Endothelial cell of umbilical vein (primary cell): ENCODE measurements at regions of chr1 and their contacts with region 1.

Region 1: DNA sequence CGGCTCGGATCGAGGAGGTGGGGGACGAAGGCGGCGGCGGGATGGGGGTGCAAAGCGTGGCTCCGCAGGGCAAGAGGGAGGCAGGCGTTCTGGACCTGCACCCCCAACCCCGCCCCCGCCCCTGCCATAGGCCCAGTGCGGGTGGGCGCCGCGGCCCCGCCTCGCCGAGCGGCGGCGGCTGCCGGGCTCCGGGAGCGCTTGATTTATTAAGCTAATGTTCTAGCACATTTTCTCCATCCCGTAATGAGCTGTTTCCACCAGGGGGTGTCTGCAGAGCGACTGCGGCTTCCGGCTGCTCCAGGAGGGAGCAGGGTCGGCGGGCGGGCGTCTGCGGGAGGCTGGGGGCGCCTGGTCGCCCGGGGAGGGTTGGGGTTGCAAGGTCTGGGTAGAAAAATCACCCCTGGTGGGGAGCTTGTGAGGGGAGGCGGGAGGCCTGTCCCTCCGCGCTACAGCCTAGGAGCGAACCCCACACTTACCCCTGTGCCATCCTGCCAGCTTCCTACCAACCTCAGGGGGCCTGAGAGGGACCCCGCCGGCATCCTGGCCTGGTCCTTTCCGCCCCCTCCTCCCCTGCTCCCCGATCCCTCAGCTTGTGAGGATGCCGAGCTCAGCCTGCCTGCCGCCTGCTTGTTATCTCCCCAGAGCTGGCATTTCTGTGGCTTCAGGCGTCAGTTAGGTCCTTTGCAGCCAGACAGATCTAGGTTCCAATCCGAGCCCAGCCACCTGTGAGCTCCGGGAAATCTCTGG is 48.5 kb upstream of the ACOT11 start:
- DNase-seq: peak; percentile 43
- H3K4me3 ChIP-seq: peak overlapping the region; percentile 17 to 27 (median 26)
- H3K27ac ChIP-seq: no peak overlapping the region
- H3K4me1 ChIP-seq: peaks cover 4% of the 10 kb centered on the region
- H3K27me3 ChIP-seq: peaks cover 8 to 9% of the 10 kb centered on the region in 2 experiments
- CTCF ChIP-seq: peak in 1 of 2 donors; percentile 51
- POLR2A ChIP-seq: no peak

Region 2: DNA sequence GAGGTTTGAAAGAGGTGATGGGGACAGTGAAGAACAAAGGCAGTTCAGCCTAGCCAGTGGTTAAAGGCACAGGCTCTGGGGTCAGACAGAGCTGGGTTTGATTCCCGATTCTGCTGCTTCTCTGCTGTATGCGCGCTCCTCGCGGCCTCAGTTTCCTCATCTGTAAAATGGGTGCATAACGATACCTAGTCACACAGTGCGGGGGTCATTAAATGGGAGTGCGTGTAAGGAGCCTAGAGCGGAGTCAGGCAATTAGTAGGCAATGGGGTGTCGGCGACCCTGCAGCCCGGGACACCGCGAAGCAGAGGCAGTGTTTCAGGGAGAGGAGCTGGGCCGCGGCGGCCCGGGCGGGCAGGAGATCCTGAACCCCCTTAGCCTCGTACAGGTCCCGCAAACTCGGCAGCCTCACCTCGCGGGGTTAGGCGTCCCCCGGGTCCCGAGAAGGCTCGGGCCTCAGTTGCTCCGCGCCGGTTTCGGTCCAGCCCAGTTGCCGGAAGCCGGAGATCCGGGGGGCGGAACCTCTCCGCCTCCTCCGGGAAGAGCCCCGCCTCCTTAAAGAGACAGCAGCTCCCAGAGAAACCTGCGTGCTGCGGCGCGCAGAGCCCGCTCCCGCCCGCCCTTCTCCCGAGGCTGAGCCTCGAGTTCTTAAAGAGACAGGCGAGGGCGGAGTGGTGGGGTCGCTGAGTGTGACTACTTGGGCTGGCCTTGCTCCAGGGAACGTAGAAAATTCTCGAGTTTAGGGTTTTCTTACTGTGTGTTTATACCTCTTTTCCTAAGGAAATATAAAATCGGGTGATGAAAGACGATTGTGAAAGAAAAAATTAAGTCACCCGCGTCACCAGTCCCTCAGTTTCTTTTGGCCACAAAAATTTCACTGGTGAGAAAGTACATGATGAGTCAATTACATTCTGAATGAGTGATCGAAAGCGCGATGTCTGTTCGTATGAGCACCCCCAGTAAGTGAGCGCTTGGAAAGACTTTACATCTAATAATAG is 609.9 kb before region 1 on chr1 and contains the start of gene YIPF1:
- CTCF ChIA-PET with region 1: no interaction called
- POLR2A ChIA-PET with region 1: no interaction called
- dilution Hi-C with region 1: no loop called
- intact Hi-C with region 1: no loop called
- DNase-seq: peak; percentile 88
- H3K4me3 ChIP-seq: peak within 1 kb of the TSS; percentile 36 to 86 (median 67)
- H3K27ac ChIP-seq: no peak within 1 kb of the TSS
- H3K4me1 ChIP-seq: peaks cover 8% of the 10 kb centered on the region
- H3K27me3 ChIP-seq: no peaks in the 10 kb centered on the region
- CTCF ChIP-seq: no peak
- POLR2A ChIP-seq: peak; percentile 78
- total RNA-seq, gene YIPF1: 14.8 TPM in 2 replicates

Region 3: GRCh38 chr1:54429838-54430237 is 69.7 kb before region 1 on chr1:
- CTCF ChIA-PET with region 1: no interaction called
- POLR2A ChIA-PET with region 1: no interaction called
- dilution Hi-C with region 1: no loop called
- intact Hi-C with region 1: no loop called
- DNase-seq: no peak
- H3K4me3 ChIP-seq: no peak overlapping the region
- H3K27ac ChIP-seq: no peak overlapping the region
- H3K4me1 ChIP-seq: no peaks in the 10 kb centered on the region
- H3K27me3 ChIP-seq: peaks cover 0 to 2% of the 10 kb centered on the region in 2 experiments
- CTCF ChIP-seq: no peak
- POLR2A ChIP-seq: no peak

Region 4: DNA sequence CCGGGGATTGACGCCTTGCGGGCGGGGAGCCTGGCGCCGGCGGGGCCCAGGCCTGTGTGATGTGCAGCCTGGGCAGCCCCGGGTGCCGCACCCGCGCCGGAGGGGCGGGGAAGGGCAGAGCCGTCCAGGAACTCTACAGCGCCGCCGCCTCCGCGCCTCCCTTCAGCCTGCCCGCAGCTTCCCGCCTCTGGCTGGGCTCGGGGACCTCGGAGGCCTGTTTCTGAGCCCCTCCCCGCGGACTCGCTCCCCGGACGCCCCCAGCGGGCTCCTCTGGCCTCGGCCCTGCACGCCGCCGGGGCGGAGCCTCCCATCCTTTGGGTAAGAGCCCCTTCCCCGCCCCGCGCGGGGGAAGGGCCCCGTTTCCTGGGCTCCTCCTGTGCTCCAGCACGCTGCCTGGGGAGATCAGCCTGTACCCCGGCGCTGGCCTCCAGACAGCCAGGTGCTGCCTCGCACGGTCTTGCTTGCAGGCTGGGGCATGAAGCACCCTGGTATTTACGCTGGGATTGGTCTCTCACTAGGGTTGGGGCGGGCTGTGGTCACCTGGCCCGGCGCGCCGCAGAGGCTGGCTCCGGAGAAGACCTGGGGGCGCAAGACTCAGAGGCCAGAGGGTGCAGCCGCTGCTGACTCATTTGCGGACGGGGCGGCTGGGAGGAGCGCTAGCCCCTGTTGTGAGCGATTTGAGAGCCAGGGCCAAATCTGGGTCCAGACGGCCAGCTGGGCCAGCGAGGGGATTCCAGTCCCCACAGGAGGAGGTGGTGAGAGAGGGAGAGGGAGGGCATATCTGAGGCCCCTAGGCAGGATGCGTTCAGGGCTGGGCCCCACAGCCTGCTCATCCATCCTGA is 42.8 kb after region 1 on chr1:
- CTCF ChIA-PET with region 1: interaction called, 13 read pairs
- POLR2A ChIA-PET with region 1: no interaction called
- dilution Hi-C with region 1: no loop called
- intact Hi-C with region 1: loop called (anchors 2 kb)
- DNase-seq: peak; percentile 38
- H3K4me3 ChIP-seq: peak overlapping the region; percentile 37 to 56 (median 39)
- H3K27ac ChIP-seq: peak overlapping the region; percentile 54
- H3K4me1 ChIP-seq: peaks cover 19% of the 10 kb centered on the region
- H3K27me3 ChIP-seq: no peaks in the 10 kb centered on the region
- CTCF ChIP-seq: peak in 1 of 2 donors; percentile 16
- POLR2A ChIP-seq: peak; percentile 29

Region 5: GRCh38 chr1:54547601-54548388 is 48.3 kb after region 1 on chr1 and contains the start of gene ACOT11:
- CTCF ChIA-PET with region 1: interaction called, 13 read pairs
- POLR2A ChIA-PET with region 1: no interaction called
- dilution Hi-C with region 1: no loop called
- intact Hi-C with region 1: loop called (anchors 2 kb)
- DNase-seq: no peak
- H3K4me3 ChIP-seq: no peak within 1 kb of the TSS
- H3K27ac ChIP-seq: no peak within 1 kb of the TSS
- H3K4me1 ChIP-seq: peaks cover 10% of the 10 kb centered on the region
- H3K27me3 ChIP-seq: no peaks in the 10 kb centered on the region
- CTCF ChIP-seq: peak; percentile 16 to 29
- POLR2A ChIP-seq: no peak
- total RNA-seq, gene ACOT11: 5.4 and 5.7 TPM in 2 replicates

Region 6: DNA sequence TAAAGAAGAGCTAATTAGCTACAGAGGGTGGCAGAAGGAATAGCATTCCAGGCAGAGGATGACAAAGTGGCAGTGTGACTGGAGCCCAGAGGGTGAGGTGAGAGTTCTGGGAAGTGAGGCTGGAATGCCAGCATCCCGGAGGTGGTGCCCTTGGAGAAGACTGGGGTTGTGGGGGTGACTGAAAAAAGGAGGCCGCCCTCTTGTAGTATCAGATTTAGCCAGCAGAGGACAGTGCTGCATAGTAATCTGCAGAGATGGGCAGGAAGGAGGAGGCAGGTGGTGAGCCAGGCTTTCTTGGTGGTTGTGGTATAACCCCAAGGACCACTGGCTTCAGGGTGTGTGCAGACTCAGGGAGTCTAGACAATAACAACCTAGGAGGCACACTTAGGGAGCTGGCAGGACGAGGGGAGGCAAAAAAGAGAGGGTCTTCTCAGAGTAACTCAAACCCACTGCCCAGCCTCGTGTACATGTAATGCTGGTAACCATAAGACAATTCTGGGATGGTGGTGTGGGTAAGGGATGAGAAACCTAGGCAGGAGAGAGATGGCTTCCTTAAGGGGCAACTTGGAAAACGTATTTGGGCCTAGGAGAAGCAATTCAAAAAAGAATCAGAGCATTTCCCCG is 172.6 kb after region 1 on chr1:
- CTCF ChIA-PET with region 1: interaction called, 11 read pairs
- POLR2A ChIA-PET with region 1: no interaction called
- dilution Hi-C with region 1: no loop called
- intact Hi-C with region 1: no loop called
- DNase-seq: peak; percentile 49
- H3K4me3 ChIP-seq: no peak overlapping the region
- H3K27ac ChIP-seq: no peak overlapping the region
- H3K4me1 ChIP-seq: no peaks in the 10 kb centered on the region
- H3K27me3 ChIP-seq: peaks cover 0 to 2% of the 10 kb centered on the region in 2 experiments
- CTCF ChIP-seq: peak; percentile 63 to 78
- POLR2A ChIP-seq: no peak

Region 7: GRCh38 chr1:54715493-54716298 is 216.2 kb after region 1 on chr1 and contains the start of gene TTC4:
- CTCF ChIA-PET with region 1: interaction called, 12 read pairs
- POLR2A ChIA-PET with region 1: no interaction called
- dilution Hi-C with region 1: no loop called
- intact Hi-C with region 1: no loop called
- DNase-seq: peak; percentile 81
- H3K4me3 ChIP-seq: peak within 1 kb of the TSS; percentile 68 to 98 (median 95)
- H3K27ac ChIP-seq: peak within 1 kb of the TSS; percentile 77
- H3K4me1 ChIP-seq: peaks cover 11% of the 10 kb centered on the region
- H3K27me3 ChIP-seq: peaks cover 0 to 2% of the 10 kb centered on the region in 2 experiments
- CTCF ChIP-seq: no peak
- POLR2A ChIP-seq: peak; percentile 96
- total RNA-seq, gene TTC4: 21.4 and 28.8 TPM in 2 replicates

Region 8: DNA sequence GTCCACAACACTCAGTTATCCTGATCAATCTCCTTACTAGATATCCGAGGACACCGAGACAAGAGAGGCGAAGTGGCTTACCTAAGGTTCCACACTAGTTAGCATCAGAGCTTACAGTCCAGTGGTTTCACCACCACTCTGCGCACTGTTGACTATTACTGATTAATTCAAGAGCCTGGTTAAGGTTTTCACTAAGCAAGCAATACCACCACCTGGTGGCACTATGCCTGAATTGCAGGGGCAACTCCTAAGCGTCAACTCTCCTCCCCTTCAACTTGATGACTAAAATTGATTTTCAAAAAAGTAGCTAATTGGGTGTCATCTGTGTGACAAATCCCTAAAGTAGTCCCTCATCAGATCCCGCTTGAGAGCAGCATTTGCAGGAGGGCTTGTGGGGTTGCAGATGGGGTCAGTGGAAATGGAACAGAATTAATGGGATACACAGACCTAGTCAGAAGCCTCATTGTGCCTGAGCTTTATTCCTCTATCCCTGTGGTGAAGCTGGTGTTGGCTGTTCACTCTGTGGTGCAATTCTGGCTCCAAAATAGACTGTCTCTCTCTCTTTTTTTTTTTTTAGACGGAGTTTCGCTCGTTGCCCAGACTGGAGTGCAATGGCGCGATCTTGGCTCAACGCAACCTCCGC is 292.5 kb after region 1 on chr1:
- CTCF ChIA-PET with region 1: interaction called, 10 read pairs
- POLR2A ChIA-PET with region 1: no interaction called
- dilution Hi-C with region 1: no loop called
- intact Hi-C with region 1: loop called (anchors 5 kb)
- DNase-seq: peak; percentile 20
- H3K4me3 ChIP-seq: no peak overlapping the region
- H3K27ac ChIP-seq: no peak overlapping the region
- H3K4me1 ChIP-seq: no peaks in the 10 kb centered on the region
- H3K27me3 ChIP-seq: peaks cover 2% of the 10 kb centered on the region in 2 experiments
- CTCF ChIP-seq: peak; percentile 55 to 73
- POLR2A ChIP-seq: no peak

Region 9: DNA sequence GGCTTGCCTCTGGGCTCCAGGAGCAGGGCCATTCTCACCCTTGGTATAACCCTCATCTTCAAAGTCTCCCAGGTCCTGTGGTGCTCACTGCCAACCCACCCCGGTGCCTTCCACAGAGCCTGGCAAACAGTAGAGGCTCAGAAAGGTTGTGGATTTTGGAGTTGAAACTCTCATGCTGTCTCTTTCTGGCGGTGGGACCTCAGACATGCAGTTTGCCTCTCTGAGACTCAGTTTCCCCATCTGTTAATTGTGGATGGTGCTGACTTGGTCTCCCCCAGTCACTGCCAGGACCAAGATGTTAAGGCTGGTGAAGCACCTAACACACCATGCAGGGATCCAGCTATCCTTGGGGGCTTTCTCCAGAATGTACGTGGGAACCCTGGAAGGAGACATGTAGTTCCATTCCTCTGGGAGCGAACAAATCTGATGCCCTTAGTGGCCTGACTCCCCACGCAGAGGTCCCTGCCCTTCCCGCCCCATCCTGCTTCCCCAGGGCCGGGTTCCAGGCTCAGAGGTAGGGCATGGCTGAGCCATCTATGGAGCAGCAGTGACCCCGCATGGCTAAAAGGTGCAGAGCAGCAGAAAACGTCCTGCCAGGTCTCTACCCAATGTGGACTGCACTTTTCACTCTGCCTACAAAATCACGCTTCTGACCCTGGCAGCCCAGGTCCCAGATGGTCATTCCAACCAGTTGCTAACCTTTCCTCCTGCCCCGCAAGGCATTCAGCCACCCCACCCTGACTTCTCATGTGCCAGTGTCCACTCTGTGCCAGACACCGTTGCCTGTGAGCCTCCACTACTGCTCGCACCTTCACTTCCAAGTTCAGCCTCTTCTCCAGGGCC is 310.8 kb after region 1 on chr1:
- CTCF ChIA-PET with region 1: interaction called, 17 read pairs
- POLR2A ChIA-PET with region 1: no interaction called
- dilution Hi-C with region 1: no loop called
- intact Hi-C with region 1: loop called (anchors 1 kb)
- DNase-seq: peak; percentile 54
- H3K4me3 ChIP-seq: no peak overlapping the region
- H3K27ac ChIP-seq: no peak overlapping the region
- H3K4me1 ChIP-seq: no peaks in the 10 kb centered on the region
- H3K27me3 ChIP-seq: no peaks in the 10 kb centered on the region
- CTCF ChIP-seq: peak; percentile 76 to 89
- POLR2A ChIP-seq: no peak

Region 10: DNA sequence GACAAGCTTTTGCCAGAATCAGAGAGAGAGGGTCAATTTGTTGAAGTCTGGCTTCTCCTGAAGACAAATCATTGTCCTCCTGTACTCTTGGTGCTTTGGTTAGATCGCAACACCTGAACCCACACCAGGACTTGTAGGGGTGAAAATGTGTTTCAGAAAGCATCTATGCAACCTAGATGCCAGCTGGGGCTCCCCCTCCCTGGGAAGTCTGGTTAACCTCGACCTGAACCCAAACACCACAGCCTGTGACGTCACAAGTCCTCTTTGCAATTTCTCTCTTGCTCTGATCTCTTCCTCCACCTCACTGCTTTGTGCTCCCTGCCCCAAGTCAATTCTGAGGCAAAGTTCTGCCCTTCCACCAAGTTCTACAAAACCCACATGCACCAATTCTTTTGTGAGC is 758.4 kb after region 1 on chr1:
- CTCF ChIA-PET with region 1: no interaction called
- POLR2A ChIA-PET with region 1: no interaction called
- dilution Hi-C with region 1: no loop called
- intact Hi-C with region 1: no loop called
- DNase-seq: no peak
- H3K4me3 ChIP-seq: no peak overlapping the region
- H3K27ac ChIP-seq: no peak overlapping the region
- H3K4me1 ChIP-seq: no peaks in the 10 kb centered on the region
- H3K27me3 ChIP-seq: peaks cover 0 to 3% of the 10 kb centered on the region in 2 experiments
- CTCF ChIP-seq: no peak
- POLR2A ChIP-seq: no peak